ENCODE measurements at regions of chr19 and their contacts with region 1.

Region 1: GRCh38 chr19:48216933-48217332 is 38.8 kb downstream of the CARD8 start:
- DNase-seq: no peak
- ATAC-seq: no peak
- H3K4me3 ChIP-seq: no peak overlapping the region
- H3K27ac ChIP-seq: no peak overlapping the region
- H3K4me1 ChIP-seq: no peaks in the 10 kb centered on the region
- H3K27me3 ChIP-seq: no peaks in the 10 kb centered on the region
- CTCF ChIP-seq: no peak; the same call in 1 of the 2 replicates

Region 2: GRCh38 chr19:48203732-48204628 is 13.0 kb before region 1 on chr19:
- CTCF ChIA-PET with region 1: interaction called, 12 read pairs
- POLR2A ChIA-PET with region 1: no interaction called
- in situ Hi-C with region 1: no loop called
- intact Hi-C with region 1: no loop called
- DNase-seq: peak; percentile 54
- ATAC-seq: peak; percentile 100
- H3K4me3 ChIP-seq: peak overlapping the region; percentile 68 to 93
- H3K27ac ChIP-seq: peak overlapping the region; percentile 93
- H3K4me1 ChIP-seq: peaks cover 8% of the 10 kb centered on the region; the same call in 1 of the 2 replicates
- H3K27me3 ChIP-seq: no peaks in the 10 kb centered on the region
- CTCF ChIP-seq: no peak

Measured in Panc1 (cell line).